Activated T-helper 2 cell treated with anti-CD3 and anti-CD28 coated beads, Interferon-gamma antibody, Interleukin-2, Interleukin-4, amounts not matched to agents 10 μg/mL and 5 μg/mL and 100 μg/mL, durations not matched to agents 14 hours and 24 hours and 36 hours (primary cell): ENCODE measurements at regions of chr4 and their contacts with region 1.

Region 1: GRCh38 chr4:98283219-98284189 is 22.3 kb downstream of the RAP1GDS1 start:
- DNase-seq: no peak
- H3K4me3 Mint-ChIP-seq: peak overlapping the region; percentile 17
- H3K27ac Mint-ChIP-seq: peak overlapping the region; percentile 74
- H3K4me1 Mint-ChIP-seq: peaks cover 41% of the 10 kb centered on the region
- H3K27me3 Mint-ChIP-seq: no peaks in the 10 kb centered on the region

Region 2: GRCh38 chr4:98055800-98056501 is 227.6 kb before region 1 on chr4:
- intact Hi-C with region 1: no loop called
- DNase-seq: no peak
- H3K4me3 Mint-ChIP-seq: no peak overlapping the region
- H3K27ac Mint-ChIP-seq: no peak overlapping the region
- H3K4me1 Mint-ChIP-seq: no peaks in the 10 kb centered on the region
- H3K27me3 Mint-ChIP-seq: no peaks in the 10 kb centered on the region

Region 3: DNA sequence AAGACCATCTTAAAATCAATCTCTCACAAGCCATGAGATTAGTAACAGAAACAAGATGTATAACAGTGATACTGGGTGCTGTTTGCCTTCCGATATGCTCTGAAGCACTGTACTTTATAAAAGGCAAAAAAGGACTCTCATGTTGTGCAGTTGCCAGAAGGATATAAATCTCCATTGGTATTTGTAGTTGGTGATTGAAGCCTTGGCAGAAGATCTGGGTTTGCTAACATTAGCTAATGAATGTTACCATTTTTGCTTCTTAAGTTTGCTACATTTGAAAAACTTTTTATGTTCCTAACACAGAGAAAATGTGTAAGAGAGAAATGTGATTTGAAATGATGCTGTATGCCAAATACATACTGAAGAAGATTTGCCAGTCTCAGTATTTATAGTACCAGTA is 22.1 kb after region 1 on chr4:
- intact Hi-C with region 1: no loop called
- DNase-seq: no peak
- H3K4me3 Mint-ChIP-seq: no peak overlapping the region
- H3K27ac Mint-ChIP-seq: no peak overlapping the region
- H3K4me1 Mint-ChIP-seq: peaks cover 3% of the 10 kb centered on the region
- H3K27me3 Mint-ChIP-seq: no peaks in the 10 kb centered on the region

Region 4: GRCh38 chr4:98406819-98407218 is 123.3 kb after region 1 on chr4:
- intact Hi-C with region 1: loop called (anchors 2 kb)
- DNase-seq: no peak
- H3K4me3 Mint-ChIP-seq: no peak overlapping the region
- H3K27ac Mint-ChIP-seq: peak overlapping the region; percentile 51
- H3K4me1 Mint-ChIP-seq: peaks cover 12% of the 10 kb centered on the region
- H3K27me3 Mint-ChIP-seq: no peaks in the 10 kb centered on the region